Activated CD8-positive, alpha-beta T cell treated with anti-CD3 and anti-CD28 coated beads, Interleukin-2, amount 10 ng/mL, durations not matched to agents 7 days and 5 days (primary cell): ENCODE measurements at regions of chr2 and their contacts with region 1.

Region 1: DNA sequence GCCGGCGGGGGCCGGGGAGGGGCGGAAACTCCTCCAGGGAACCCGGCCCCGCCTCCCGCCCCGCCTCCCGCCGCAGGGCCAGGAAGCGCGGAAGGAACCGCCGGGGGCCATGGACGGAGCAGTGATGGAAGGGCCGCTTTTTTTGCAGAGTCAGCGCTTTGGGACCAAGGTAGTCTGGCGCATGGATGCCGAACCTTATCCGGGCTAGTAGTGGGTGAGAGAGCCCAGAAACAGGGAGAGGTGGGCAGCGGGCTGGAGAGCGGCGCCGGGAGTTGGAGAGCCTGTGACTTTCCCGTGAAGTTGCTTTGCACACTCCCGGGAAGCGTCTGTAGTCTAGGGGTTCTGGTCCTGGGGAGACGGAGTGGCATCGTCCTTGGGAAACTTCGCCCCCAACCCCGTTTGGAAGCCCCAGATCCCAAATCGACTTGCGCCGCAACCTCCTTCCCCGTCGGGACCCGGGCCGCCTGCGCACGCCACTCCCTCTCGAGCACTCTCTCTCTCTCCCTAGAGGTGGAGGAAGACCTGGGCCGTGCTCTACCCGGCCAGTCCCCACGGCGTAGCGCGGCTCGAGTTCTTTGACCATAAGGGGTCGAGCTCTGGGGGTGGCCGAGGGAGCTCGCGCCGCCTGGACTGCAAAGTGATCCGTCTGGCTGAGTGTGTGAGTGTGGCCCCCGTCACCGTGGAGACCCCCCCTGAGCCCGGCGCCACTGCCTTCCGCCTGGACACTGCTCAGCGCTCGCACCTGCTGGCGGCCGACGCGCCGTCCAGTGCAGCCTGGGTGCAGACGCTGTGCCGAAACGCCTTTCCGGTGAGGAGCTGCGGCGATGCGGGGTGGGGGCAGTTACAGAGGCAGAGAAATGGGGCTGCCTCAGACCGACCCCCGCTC is at the start of gene DOK1:
- DNase-seq: peak; percentile 87
- ATAC-seq: peak; percentile 82
- H3K4me3 Mint-ChIP-seq: peak within 1 kb of the TSS; percentile 95
- H3K27ac Mint-ChIP-seq: peak within 1 kb of the TSS; percentile 93
- H3K4me1 Mint-ChIP-seq: peaks cover 38% of the 10 kb centered on the region
- H3K27me3 Mint-ChIP-seq: peaks cover 14% of the 10 kb centered on the region
- total RNA-seq, gene DOK1: 32.4 to 35.9 TPM

Region 2: DNA sequence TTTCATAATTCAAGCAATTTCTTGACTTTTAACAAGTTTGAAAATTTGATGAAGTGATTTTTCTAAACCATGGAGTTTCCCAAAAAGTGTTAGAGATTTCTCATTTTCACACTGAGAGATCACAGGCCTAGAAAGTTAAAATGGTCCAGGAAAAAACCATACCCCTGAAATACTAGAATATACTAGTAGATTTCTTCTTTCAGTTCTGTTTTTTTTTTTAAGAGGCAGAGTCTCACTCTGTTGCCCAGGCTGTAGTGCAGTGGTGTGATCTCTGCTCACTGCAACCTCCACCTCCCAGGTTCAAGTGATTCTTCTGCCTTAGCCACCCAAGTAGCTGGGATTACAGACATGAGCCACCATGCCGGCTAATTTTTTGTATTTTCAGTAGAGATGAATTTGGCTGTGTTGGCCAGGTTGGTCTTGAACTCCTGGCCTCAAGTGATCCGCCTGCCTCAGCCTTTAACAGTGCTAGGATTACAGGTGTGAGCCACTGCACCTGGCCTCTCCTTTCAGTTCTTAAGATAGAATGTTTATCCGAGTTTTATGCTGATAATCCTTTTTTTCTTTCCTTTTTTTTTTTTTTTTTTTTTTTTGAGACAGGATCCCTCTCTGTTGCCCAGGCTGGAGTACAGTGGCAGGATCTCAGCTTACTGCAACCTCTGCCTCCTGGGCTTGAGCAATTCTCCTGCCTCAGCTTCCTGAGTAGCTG is 342.0 kb before region 1 on chr2:
- CTCF ChIA-PET with region 1: no interaction called
- POLR2A ChIA-PET with region 1: no interaction called
- DNase-seq: no peak
- ATAC-seq: no peak
- H3K4me3 Mint-ChIP-seq: no peak overlapping the region
- H3K27ac Mint-ChIP-seq: no peak overlapping the region
- H3K4me1 Mint-ChIP-seq: peaks cover 14% of the 10 kb centered on the region
- H3K27me3 Mint-ChIP-seq: no peaks in the 10 kb centered on the region

Region 3: GRCh38 chr2:74317701-74318301 is 237.1 kb before region 1 on chr2:
- CTCF ChIA-PET with region 1: no interaction called
- POLR2A ChIA-PET with region 1: no interaction called
- DNase-seq: no peak
- ATAC-seq: no peak
- H3K4me3 Mint-ChIP-seq: no peak overlapping the region
- H3K27ac Mint-ChIP-seq: no peak overlapping the region
- H3K4me1 Mint-ChIP-seq: no peaks in the 10 kb centered on the region
- H3K27me3 Mint-ChIP-seq: peaks cover 2% of the 10 kb centered on the region

Region 4: GRCh38 chr2:74566754-74567085 is 11.8 kb after region 1 on chr2:
- CTCF ChIA-PET with region 1: interaction called, 4 read pairs
- POLR2A ChIA-PET with region 1: interaction called, 13 read pairs
- DNase-seq: no peak
- ATAC-seq: no peak
- H3K4me3 Mint-ChIP-seq: no peak overlapping the region
- H3K27ac Mint-ChIP-seq: no peak overlapping the region
- H3K4me1 Mint-ChIP-seq: peaks cover 34% of the 10 kb centered on the region
- H3K27me3 Mint-ChIP-seq: peaks cover 2% of the 10 kb centered on the region